ENCODE measurements at regions of chr2 and their contacts with region 1.

Region 1: GRCh38 chr2:7523481-7524120 is 606.4 kb downstream of the RNF144A start:
- DNase-seq: no peak
- H3K4me3 Mint-ChIP-seq: peak overlapping the region; percentile 63
- H3K27ac Mint-ChIP-seq: peak overlapping the region; percentile 98
- H3K4me1 Mint-ChIP-seq: peaks cover 53% of the 10 kb centered on the region
- H3K27me3 Mint-ChIP-seq: no peaks in the 10 kb centered on the region

Region 2: DNA sequence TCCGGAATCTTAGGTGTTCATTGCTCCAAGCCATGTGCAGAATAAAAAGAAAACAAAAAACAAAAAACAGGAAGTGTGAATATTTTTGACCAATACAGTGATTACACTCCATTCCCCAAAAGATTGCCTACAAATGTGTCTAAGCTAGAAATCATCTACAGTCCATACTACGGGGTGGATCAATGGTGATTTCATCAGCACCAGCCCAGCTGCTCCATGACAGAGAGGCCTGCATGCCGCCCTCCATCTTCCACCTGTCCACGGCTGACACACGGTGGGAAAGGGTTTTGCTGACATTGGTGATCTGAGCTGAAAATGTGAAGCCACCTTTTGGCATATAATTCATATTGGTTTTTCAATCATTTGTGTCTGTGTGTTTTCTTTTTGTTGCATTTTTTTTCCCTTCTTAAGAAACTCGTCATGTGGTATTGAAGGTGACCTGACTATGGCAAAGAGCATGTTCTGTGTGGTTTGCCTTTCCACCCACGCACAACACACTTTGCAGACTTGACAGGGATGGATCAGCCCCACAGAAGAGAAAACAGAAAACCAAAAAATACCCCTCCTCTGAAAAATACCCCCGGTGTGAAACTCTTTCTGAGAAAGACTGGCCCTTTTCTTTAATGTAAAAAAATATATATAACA is 73.3 kb before region 1 on chr2:
- intact Hi-C with region 1: loop called (anchors 1 kb)
- DNase-seq: peak; percentile 90
- H3K4me3 Mint-ChIP-seq: peak overlapping the region; percentile 58
- H3K27ac Mint-ChIP-seq: peak overlapping the region; percentile 100
- H3K4me1 Mint-ChIP-seq: peaks cover 70% of the 10 kb centered on the region
- H3K27me3 Mint-ChIP-seq: no peaks in the 10 kb centered on the region

Region 3: DNA sequence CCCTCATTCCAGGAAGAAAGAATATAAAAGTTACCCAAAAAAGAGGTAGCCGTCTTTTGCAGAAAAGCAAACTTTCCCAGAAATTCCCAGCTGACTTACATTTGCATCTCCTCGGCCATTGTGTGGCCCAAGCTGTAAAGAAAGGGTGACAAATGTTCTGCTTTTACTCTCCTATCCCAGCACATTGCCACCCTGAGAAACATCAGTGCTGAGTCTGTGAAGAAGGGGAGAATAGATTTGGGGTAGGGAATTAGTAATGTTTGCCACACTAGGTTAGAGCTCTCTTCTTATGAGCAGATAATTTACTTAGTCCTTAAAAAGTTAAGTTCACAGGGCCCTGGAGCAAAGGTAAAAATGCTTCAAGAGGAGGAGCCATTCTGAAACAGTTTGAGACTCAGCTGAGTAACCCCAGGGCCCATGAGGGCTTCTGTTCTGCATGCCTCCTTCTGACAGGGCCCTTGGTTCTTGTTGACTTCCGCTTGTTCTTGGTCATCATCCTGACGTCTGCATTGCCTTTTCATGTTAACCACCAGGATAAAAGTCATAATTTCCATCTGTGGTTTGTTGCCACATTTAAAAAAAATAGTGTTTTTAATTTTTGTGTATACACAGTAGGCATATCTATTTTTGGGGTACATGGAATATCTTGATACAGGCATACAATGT is 55.7 kb before region 1 on chr2:
- intact Hi-C with region 1: loop called (anchors 1 kb)
- DNase-seq: peak; percentile 85
- H3K4me3 Mint-ChIP-seq: peak overlapping the region; percentile 51
- H3K27ac Mint-ChIP-seq: peak overlapping the region; percentile 97
- H3K4me1 Mint-ChIP-seq: peaks cover 36% of the 10 kb centered on the region
- H3K27me3 Mint-ChIP-seq: no peaks in the 10 kb centered on the region

Region 4: GRCh38 chr2:7552825-7553570 is 29.4 kb after region 1 on chr2:
- intact Hi-C with region 1: loop called (anchors 2 kb)
- DNase-seq: peak; percentile 66
- H3K4me3 Mint-ChIP-seq: peak overlapping the region; percentile 47
- H3K27ac Mint-ChIP-seq: peak overlapping the region; percentile 79
- H3K4me1 Mint-ChIP-seq: peaks cover 24% of the 10 kb centered on the region
- H3K27me3 Mint-ChIP-seq: no peaks in the 10 kb centered on the region

Region 5: GRCh38 chr2:8514796-8515758 is 991.5 kb after region 1 on chr2:
- intact Hi-C with region 1: loop called (anchors 10 kb)
- DNase-seq: peak; percentile 87
- H3K4me3 Mint-ChIP-seq: peak overlapping the region; percentile 58
- H3K27ac Mint-ChIP-seq: peak overlapping the region; percentile 96
- H3K4me1 Mint-ChIP-seq: peaks cover 63% of the 10 kb centered on the region
- H3K27me3 Mint-ChIP-seq: no peaks in the 10 kb centered on the region